PC-9 (cell line): ENCODE measurements at regions of chr19 and their contacts with region 1.

Region 1: GRCh38 chr19:5803752-5804515 is 933 bp upstream of the NRTN start:
- DNase-seq: peak; percentile 68 to 92
- H3K4me3 ChIP-seq: peak overlapping the region; percentile 37; the same call in 1 of the 2 replicates
- H3K27ac ChIP-seq: no peak overlapping the region
- H3K4me1 ChIP-seq: no peaks in the 10 kb centered on the region
- H3K27me3 ChIP-seq: 0 out of 2 replicates have a peak, but pooled peaks cover 8% of the 10 kb centered on the region
- CTCF ChIP-seq: peak; percentile 83

Region 2: GRCh38 chr19:4867534-4868285 is 936.2 kb before region 1 on chr19 and contains the start of gene PLIN3:
- CTCF ChIA-PET with region 1: no interaction called
- POLR2A ChIA-PET with region 1: no interaction called
- intact Hi-C with region 1: no loop called
- DNase-seq: peak; percentile 69 to 90
- H3K4me3 ChIP-seq: peak within 1 kb of the TSS; percentile 89
- H3K27ac ChIP-seq: peak within 1 kb of the TSS; percentile 88
- H3K4me1 ChIP-seq: peaks cover 17% of the 10 kb centered on the region
- H3K27me3 ChIP-seq: no peaks in the 10 kb centered on the region
- CTCF ChIP-seq: no peak
- total RNA-seq, gene PLIN3: 95.9 and 104 TPM in 2 replicates

Region 3: DNA sequence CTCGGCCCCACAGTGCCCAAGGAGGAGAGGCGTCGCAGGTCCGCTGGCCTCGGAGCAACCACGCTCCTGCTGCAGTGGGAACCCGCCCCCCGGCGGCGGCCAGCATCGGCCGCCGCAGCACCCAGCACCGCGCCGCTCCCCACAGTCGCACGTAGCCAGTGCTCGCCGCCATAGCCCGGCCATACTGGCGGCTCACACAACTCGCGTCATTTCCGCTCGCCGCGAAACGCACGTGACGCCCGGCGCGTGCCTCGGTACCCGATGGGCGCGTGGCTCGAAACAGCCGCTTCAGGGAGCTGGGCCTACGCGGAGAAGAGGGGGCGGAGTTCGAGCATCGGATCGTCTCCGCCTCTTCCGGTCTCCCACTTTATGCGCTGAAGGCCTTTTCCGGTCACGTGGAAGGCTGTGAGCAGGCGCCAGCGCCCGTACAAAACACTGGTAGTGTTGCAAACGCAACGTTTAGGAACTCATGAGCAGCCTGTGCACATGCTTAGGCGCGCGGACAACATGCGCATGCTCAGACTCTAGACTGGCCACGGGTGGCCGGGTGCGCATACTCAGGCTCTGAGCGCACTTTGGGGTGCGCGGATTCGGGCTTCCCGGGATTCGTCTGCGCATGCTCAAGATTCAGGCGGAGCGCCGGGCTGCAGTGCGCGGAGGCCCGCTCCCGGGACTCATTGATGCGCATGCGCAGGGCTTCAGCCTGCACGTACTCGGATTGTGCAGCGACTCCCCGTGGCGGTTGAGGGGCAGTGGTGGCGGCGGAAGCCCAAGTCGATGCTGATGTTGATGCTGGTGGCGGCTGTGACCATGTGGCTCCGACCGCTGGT is 83.8 kb before region 1 on chr19 and contains the starts of genes CATSPERD and LONP1:
- CTCF ChIA-PET with region 1: interaction called, 11 read pairs
- POLR2A ChIA-PET with region 1: no interaction called
- intact Hi-C with region 1: no loop called
- DNase-seq: peak; percentile 90 to 92
- H3K4me3 ChIP-seq: peak within 1 kb of the TSS; percentile 97
- H3K27ac ChIP-seq: peak within 1 kb of the TSS; percentile 99
- H3K4me1 ChIP-seq: peaks cover 9% of the 10 kb centered on the region
- H3K27me3 ChIP-seq: no peaks in the 10 kb centered on the region
- CTCF ChIP-seq: peak; percentile 70
- total RNA-seq, gene CATSPERD: not detected in 2 replicates
- total RNA-seq, gene LONP1: 78.2 and 140 TPM in 2 replicates

Region 4: GRCh38 chr19:5891938-5892771 is 88.2 kb after region 1 on chr19:
- CTCF ChIA-PET with region 1: interaction called, 8 read pairs
- POLR2A ChIA-PET with region 1: no interaction called
- intact Hi-C with region 1: loop called (anchors 1 kb)
- DNase-seq: no peak
- H3K4me3 ChIP-seq: no peak overlapping the region
- H3K27ac ChIP-seq: no peak overlapping the region
- H3K4me1 ChIP-seq: no peaks in the 10 kb centered on the region
- H3K27me3 ChIP-seq: no peaks in the 10 kb centered on the region
- CTCF ChIP-seq: peak; percentile 64

Region 5: GRCh38 chr19:5913739-5914357 is 109.9 kb after region 1 on chr19 and contains the start of gene CAPS:
- CTCF ChIA-PET with region 1: no interaction called
- POLR2A ChIA-PET with region 1: no interaction called
- intact Hi-C with region 1: no loop called
- DNase-seq: peak; percentile 74 to 85
- H3K4me3 ChIP-seq: peak within 1 kb of the TSS; percentile 61
- H3K27ac ChIP-seq: peak within 1 kb of the TSS; percentile 52; the same call in 1 of the 2 replicates
- H3K4me1 ChIP-seq: peaks cover 24% of the 10 kb centered on the region
- H3K27me3 ChIP-seq: no peaks in the 10 kb centered on the region
- CTCF ChIP-seq: no peak
- total RNA-seq, gene CAPS: 32.0 and 41.5 TPM in 2 replicates

Region 6: DNA sequence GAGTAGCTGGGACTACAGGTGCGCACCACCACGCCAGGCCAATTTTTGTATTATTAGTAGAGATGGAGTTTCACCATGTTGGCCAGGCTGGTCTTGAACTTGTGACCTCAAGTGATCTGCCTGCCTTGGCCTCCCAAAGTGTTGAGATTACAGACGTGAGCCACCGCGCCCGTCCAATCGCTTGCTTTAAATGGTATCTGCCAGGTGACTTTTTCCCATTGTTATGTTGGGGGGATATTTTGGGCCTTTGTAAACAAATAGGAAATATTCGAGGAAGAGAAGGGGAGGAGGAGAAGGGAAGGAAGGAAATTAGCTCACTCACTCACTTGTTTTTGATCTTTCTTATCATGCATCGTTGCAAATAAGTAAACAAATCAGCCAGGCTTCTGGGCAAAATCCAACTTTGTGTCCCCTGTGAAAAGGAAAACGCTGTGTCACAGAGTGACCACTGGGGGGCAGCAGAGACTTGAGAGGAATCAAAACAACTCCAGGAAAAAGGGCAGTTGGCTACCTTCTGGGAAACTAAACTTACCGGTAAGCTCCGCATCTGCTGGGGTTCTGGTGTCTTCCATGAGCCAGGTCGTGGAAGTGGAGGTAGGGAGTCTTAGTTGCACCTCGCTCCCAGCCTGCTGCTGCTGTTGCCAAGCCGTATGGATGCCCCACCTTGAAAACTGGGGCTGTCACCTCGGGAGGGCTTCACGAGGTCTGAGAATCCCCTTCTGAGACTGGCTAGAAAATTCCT is 183.3 kb after region 1 on chr19:
- CTCF ChIA-PET with region 1: interaction called, 3 read pairs
- POLR2A ChIA-PET with region 1: no interaction called
- intact Hi-C with region 1: loop called (anchors 10 kb)
- DNase-seq: peak; percentile 53 to 58
- H3K4me3 ChIP-seq: no peak overlapping the region
- H3K27ac ChIP-seq: no peak overlapping the region
- H3K4me1 ChIP-seq: 0 out of 2 replicates have a peak, but pooled peaks cover 5% of the 10 kb centered on the region
- H3K27me3 ChIP-seq: no peaks in the 10 kb centered on the region
- CTCF ChIP-seq: peak; percentile 86

Region 7: DNA sequence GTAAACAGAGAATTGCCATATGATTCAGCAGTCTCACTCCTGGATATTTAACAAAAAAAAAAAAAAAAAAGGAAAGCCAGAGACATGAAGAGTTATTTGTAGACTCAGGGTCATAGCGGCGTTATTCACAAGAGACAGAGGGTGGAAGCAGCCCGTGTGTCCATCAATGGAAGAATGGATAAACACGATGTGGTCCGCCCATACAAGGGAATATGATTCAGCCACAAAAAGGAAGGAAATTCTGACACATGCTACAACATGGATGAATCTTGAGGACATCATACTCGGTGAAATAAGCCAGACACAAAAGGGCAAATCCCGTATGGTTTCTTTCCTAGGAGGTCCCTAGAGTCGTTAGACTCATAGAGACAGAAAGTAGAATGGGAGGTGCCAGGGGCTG is 346.4 kb after region 1 on chr19:
- CTCF ChIA-PET with region 1: no interaction called
- POLR2A ChIA-PET with region 1: no interaction called
- intact Hi-C with region 1: no loop called
- DNase-seq: no peak
- H3K4me3 ChIP-seq: no peak overlapping the region
- H3K27ac ChIP-seq: no peak overlapping the region
- H3K4me1 ChIP-seq: no peaks in the 10 kb centered on the region
- H3K27me3 ChIP-seq: peaks cover 26% of the 10 kb centered on the region
- CTCF ChIP-seq: no peak

Region 8: DNA sequence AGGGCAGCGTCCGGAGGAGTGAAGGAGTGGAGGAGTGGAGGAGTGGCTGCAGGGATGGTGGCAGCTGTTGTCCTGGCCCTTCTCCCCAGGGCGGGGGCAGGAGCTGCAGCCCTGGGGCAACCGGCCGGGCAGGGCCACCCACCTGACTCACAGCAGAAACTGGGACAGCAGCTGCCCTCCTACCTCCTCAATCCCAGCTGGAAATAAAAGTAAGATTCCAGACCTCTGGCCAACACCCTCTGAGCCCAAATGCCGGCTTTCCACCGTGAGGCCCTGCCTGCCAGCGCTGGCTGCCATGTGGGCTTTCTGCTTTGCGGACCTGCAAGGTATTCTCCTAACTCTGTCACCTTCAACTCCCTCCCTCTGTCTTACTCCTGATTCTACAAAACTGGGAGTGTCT is 554.1 kb after region 1 on chr19:
- CTCF ChIA-PET with region 1: interaction called, 13 read pairs
- POLR2A ChIA-PET with region 1: no interaction called
- intact Hi-C with region 1: no loop called
- DNase-seq: peak; percentile 37 to 62
- H3K4me3 ChIP-seq: peak overlapping the region; percentile 35; the same call in 1 of the 2 replicates
- H3K27ac ChIP-seq: no peak overlapping the region
- H3K4me1 ChIP-seq: peaks cover 6% of the 10 kb centered on the region; the same call in 1 of the 2 replicates
- H3K27me3 ChIP-seq: no peaks in the 10 kb centered on the region
- CTCF ChIP-seq: no peak